H1 (cell line): ENCODE measurements at regions of chr19 and their contacts with region 1.

Region 1: GRCh38 chr19:48391107-48391986 is at the start of gene KDELR1:
- DNase-seq: peak in 1 of 2 experiments; percentile 97
- H3K4me3 ChIP-seq: peak within 1 kb of the TSS; percentile 81 to 96 (median 90)
- H3K27ac ChIP-seq: peak within 1 kb of the TSS; percentile 72; the same call in 1 of the 2 replicates
- H3K4me1 ChIP-seq: peaks cover 0 to 35% (median 21%) of the 10 kb centered on the region in 4 experiments; a peak in 6 of 7 replicates
- H3K27me3 ChIP-seq: peaks cover 6 to 35% (median 29%) of the 10 kb centered on the region in 4 experiments
- CTCF ChIP-seq: peak; percentile 84 to 93 (median 84)
- EP300 ChIP-seq: no peak
- POLR2A ChIP-seq: no peak
- RAD21 ChIP-seq: peak; percentile 28 to 45; a peak in 3 of 4 replicates
- total RNA-seq, gene KDELR1: 224 and 225 TPM in 2 replicates

Region 2: GRCh38 chr19:48363810-48364563 is 27.4 kb before region 1 on chr19 and contains the starts of genes SYNGR4 and TMEM143:
- CTCF ChIA-PET with region 1: interaction called, 9 read pairs
- POLR2A ChIA-PET with region 1: interaction called, 27 read pairs
- DNase-seq: peak; percentile 96 to 100
- H3K4me3 ChIP-seq: peak within 1 kb of the TSS; percentile 44 to 90 (median 72)
- H3K27ac ChIP-seq: peak within 1 kb of the TSS; percentile 80
- H3K4me1 ChIP-seq: peaks cover 0 to 5% (median 4%) of the 10 kb centered on the region in 4 experiments; a peak in 4 of 7 replicates
- H3K27me3 ChIP-seq: peaks cover 0 to 10% (median 2%) of the 10 kb centered on the region in 4 experiments; a peak in 3 of 7 replicates
- CTCF ChIP-seq: peak in 1 of 3 experiments; percentile 8; a peak in 1 of 4 replicates
- EP300 ChIP-seq: no peak
- POLR2A ChIP-seq: peak in 1 of 2 experiments; percentile 27; a peak in 2 of 3 replicates
- RAD21 ChIP-seq: no peak
- total RNA-seq, gene SYNGR4: 1.1 TPM in 1 of 2 replicates, not detected in the other
- total RNA-seq, gene TMEM143: 14.2 and 14.7 TPM in 2 replicates

Region 3: DNA sequence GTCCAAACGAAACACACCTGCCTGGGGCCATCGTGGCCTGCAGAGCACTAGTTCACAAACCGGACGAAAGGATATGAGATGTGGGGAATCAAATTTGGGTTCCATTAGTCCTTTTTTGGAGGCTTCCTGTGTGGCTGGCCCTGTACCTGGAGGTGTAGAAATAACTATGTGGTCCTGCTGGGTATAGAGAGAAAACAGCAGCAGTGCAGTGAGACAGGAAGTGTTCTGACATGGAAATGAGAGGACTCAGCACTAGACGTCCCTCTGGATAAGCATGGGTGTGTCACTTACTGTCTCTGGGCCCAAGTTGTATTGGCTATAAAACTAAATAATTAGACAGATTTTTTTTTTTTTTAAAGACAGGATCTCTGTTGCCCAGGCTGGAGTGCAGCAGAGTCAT is 12.3 kb before region 1 on chr19:
- CTCF ChIA-PET with region 1: interaction called, 25 read pairs
- POLR2A ChIA-PET with region 1: interaction called, 5 read pairs
- DNase-seq: no peak
- H3K4me3 ChIP-seq: no peak overlapping the region
- H3K27ac ChIP-seq: no peak overlapping the region
- H3K4me1 ChIP-seq: no peaks in the 10 kb centered on the region; a peak in 1 of 7 replicates
- H3K27me3 ChIP-seq: peaks cover 0 to 2% (median 0%) of the 10 kb centered on the region in 4 experiments; a peak in 1 of 7 replicates
- CTCF ChIP-seq: no peak
- EP300 ChIP-seq: no peak
- POLR2A ChIP-seq: no peak
- RAD21 ChIP-seq: no peak

Region 4: GRCh38 chr19:48419158-48419920 is 28.0 kb after region 1 on chr19:
- CTCF ChIA-PET with region 1: interaction called, 12 read pairs
- POLR2A ChIA-PET with region 1: interaction called, 20 read pairs
- DNase-seq: peak; percentile 49 to 86
- H3K4me3 ChIP-seq: no peak overlapping the region
- H3K27ac ChIP-seq: peak overlapping the region; percentile 54; the same call in 1 of the 2 replicates
- H3K4me1 ChIP-seq: peaks cover 0 to 13% (median 5%) of the 10 kb centered on the region in 4 experiments; a peak in 5 of 7 replicates
- H3K27me3 ChIP-seq: no peaks in the 10 kb centered on the region; a peak in 1 of 7 replicates
- CTCF ChIP-seq: no peak
- EP300 ChIP-seq: no peak
- POLR2A ChIP-seq: no peak
- RAD21 ChIP-seq: no peak

Region 5: GRCh38 chr19:48514123-48514458 is 122.7 kb after region 1 on chr19:
- CTCF ChIA-PET with region 1: no interaction called
- POLR2A ChIA-PET with region 1: no interaction called
- DNase-seq: no peak
- H3K4me3 ChIP-seq: peak overlapping the region; percentile 51 to 81 (median 69); a peak in 6 of 8 replicates
- H3K27ac ChIP-seq: no peak overlapping the region
- H3K4me1 ChIP-seq: peaks cover 0 to 23% (median 12%) of the 10 kb centered on the region in 4 experiments; a peak in 5 of 7 replicates
- H3K27me3 ChIP-seq: peaks cover 0 to 12% (median 9%) of the 10 kb centered on the region in 4 experiments; a peak in 4 of 7 replicates
- CTCF ChIP-seq: no peak
- EP300 ChIP-seq: no peak
- POLR2A ChIP-seq: no peak
- RAD21 ChIP-seq: no peak